ENCODE measurements at regions of chr6 and their contacts with region 1.

Region 1: GRCh38 chr6:27078734-27079357 is 168.7 kb upstream of the PRSS16 start:
- DNase-seq: peak; percentile 48
- H3K4me3 ChIP-seq: peak overlapping the region in 1 of 4 donors; percentile 41
- H3K27ac ChIP-seq: no peak overlapping the region
- H3K4me1 ChIP-seq: peaks cover 0 to 6% (median 0%) of the 10 kb centered on the region in 4 donors
- H3K27me3 ChIP-seq: peaks cover 69% of the 10 kb centered on the region
- CTCF ChIP-seq: peak; percentile 56 to 81 (median 65)
- EP300 ChIP-seq: no peak
- POLR2A ChIP-seq: no peak

Region 2: DNA sequence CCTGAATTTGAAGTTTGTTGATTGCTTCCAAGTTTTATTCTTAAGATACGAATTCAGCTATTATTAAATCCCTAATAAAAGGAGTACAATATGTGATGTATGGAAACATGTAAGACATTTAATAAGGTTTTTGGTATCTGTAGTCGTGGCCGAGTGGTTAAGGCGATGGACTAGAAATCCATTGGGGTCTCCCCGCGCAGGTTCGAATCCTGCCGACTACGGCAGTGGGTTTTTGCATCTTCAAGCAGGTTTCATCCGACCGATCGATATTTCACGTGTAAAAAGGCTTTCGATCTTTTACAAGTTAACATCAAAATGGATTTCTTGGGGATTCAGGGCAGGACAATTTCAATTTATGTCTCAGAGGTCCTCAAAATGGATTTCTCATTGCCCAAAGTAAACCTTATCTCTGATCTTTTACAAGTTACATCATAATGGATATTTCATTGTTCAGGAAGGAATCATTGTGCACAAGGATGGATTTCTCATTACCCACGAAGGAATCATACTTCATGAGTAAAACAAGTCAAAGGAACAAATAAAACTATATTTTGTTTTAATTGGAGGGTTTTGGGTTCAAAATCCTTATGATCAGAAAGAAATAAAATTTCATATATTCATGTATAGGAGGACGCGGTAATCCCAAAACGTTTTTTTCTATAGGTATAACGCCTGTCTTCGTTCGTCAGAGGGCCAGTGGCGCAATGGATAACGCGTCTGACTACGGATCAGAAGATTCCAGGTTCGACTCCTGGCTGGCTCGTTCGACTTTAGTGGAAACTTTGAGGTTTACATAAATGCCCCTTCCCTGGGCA is 751.2 kb before region 1 on chr6:
- in situ Hi-C with region 1: loop called in 1 of 4 experiments (anchors 25 kb)
- intact Hi-C with region 1: no loop called
- DNase-seq: peak; percentile 28
- H3K4me3 ChIP-seq: no peak overlapping the region
- H3K27ac ChIP-seq: no peak overlapping the region
- H3K4me1 ChIP-seq: peaks cover 0 to 11% (median 6%) of the 10 kb centered on the region in 4 donors
- H3K27me3 ChIP-seq: peaks cover 76% of the 10 kb centered on the region
- CTCF ChIP-seq: no peak
- EP300 ChIP-seq: no peak
- POLR2A ChIP-seq: no peak

Region 3: DNA sequence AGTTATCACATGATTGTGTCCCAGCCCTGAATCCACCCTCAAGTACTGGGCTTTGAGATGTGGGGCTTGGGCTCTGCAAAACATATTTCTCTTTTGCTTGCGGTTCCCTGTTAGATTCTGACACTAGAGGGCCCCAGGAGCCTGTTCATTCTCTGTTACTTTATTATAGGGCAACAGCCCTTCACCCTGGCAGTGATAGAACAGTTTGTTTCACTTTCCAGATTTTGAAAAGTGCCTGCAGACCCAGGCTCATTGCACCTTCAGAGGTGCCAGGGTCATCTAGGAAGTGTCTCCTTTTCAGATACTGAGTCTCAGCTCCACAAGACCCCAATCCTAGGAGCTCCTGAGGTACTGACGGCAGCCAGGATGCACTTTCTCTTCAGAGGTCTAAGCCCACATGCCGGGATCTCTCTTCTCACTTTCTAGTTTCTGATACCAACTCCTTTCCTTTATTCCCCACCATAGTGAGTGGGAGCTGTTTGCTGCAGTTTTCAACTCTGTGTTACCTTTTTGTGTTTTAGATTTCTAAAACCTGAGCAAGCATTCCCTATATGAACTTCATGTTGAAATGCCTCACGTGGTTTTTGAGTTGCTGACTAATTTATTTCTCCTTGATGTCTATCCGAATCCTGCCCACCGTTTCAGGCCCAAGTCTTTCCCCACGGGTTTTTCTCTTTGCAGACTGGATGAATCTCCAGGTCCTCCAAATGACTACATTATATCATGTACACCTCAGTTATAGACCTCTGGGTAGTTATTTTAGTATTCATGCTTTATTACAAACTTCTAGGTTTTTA is 471.2 kb before region 1 on chr6:
- in situ Hi-C with region 1: loop called in 3 of 4 experiments (anchors 5 to 10 kb)
- intact Hi-C with region 1: loop called (anchors 5 kb)
- DNase-seq: peak; percentile 57
- H3K4me3 ChIP-seq: peak overlapping the region in 2 of 4 donors; percentile 13 to 37
- H3K27ac ChIP-seq: no peak overlapping the region
- H3K4me1 ChIP-seq: peaks cover 0 to 5% (median 3%) of the 10 kb centered on the region in 4 donors
- H3K27me3 ChIP-seq: peaks cover 16% of the 10 kb centered on the region
- CTCF ChIP-seq: peak; percentile 60 to 67 (median 61)
- EP300 ChIP-seq: no peak
- POLR2A ChIP-seq: no peak

Region 4: GRCh38 chr6:26613689-26614683 is 464.9 kb before region 1 on chr6:
- in situ Hi-C with region 1: loop called in 3 of 4 experiments (anchors 5 to 10 kb)
- intact Hi-C with region 1: loop called (anchors 5 kb)
- DNase-seq: no peak
- H3K4me3 ChIP-seq: peak overlapping the region in 2 of 4 donors; percentile 19 to 38
- H3K27ac ChIP-seq: no peak overlapping the region
- H3K4me1 ChIP-seq: peaks cover 7 to 14% (median 9%) of the 10 kb centered on the region in 4 donors
- H3K27me3 ChIP-seq: peaks cover 74% of the 10 kb centered on the region
- CTCF ChIP-seq: no peak
- EP300 ChIP-seq: no peak
- POLR2A ChIP-seq: no peak

Region 5: DNA sequence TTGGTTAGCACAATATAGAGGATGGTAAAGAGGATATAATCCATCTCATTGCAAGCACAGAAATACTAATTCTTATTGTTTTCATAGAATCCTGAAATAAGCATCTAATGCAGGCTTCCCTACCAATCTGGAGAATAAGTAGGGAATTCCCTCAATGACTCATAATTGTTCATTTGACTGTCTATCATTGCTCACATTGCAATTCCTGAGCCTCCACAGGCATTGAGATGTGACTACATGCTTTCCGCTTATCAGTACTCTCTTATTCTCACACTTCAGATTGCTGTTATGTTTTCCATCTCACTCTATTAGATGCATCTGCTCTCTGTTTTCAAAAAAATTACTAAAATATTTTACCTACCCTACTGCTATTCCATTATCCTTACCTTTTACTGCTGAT is 47.5 kb before region 1 on chr6:
- in situ Hi-C with region 1: no loop called
- intact Hi-C with region 1: no loop called
- DNase-seq: no peak
- H3K4me3 ChIP-seq: no peak overlapping the region
- H3K27ac ChIP-seq: no peak overlapping the region
- H3K4me1 ChIP-seq: no peaks in the 10 kb centered on the region
- H3K27me3 ChIP-seq: peaks cover 14% of the 10 kb centered on the region
- CTCF ChIP-seq: no peak
- EP300 ChIP-seq: no peak
- POLR2A ChIP-seq: no peak